Common myeloid progenitor, CD34-positive (primary cell): ENCODE measurements at regions of chr19 and their contacts with region 1.

Region 1: GRCh38 chr19:12064590-12065538 is at the start of gene ZNF844:
- DNase-seq: peak; percentile 81 to 89 (median 89)
- H3K4me3 ChIP-seq: peak within 1 kb of the TSS; percentile 52 to 92 (median 85)
- H3K27ac ChIP-seq: peak within 1 kb of the TSS; percentile 74 to 84
- H3K4me1 ChIP-seq: peaks cover 0 to 10% (median 3%) of the 10 kb centered on the region in 4 experiments
- H3K27me3 ChIP-seq: no peaks in the 10 kb centered on the region

Region 2: GRCh38 chr19:12052497-12053169 is 12.2 kb before region 1 on chr19 and contains the start of gene ZNF878:
- CTCF ChIA-PET with region 1: interaction called, 13 read pairs
- POLR2A ChIA-PET with region 1: no interaction called
- DNase-seq: peak; percentile 75 to 87 (median 85)
- H3K4me3 ChIP-seq: peak within 1 kb of the TSS; percentile 56 to 89 (median 81)
- H3K27ac ChIP-seq: no peak within 1 kb of the TSS
- H3K4me1 ChIP-seq: peaks cover 0 to 16% (median 14%) of the 10 kb centered on the region in 4 experiments
- H3K27me3 ChIP-seq: peaks cover 0 to 2% (median 0%) of the 10 kb centered on the region in 5 experiments

Region 3: GRCh38 chr19:12092065-12092867 is 27.4 kb after region 1 on chr19:
- CTCF ChIA-PET with region 1: interaction called, 16 read pairs
- POLR2A ChIA-PET with region 1: no interaction called
- DNase-seq: peak; percentile 90 to 97 (median 96)
- H3K4me3 ChIP-seq: peak overlapping the region; percentile 67 to 92 (median 81)
- H3K27ac ChIP-seq: peak overlapping the region; percentile 77 to 91
- H3K4me1 ChIP-seq: peaks cover 0 to 12% (median 4%) of the 10 kb centered on the region in 4 experiments
- H3K27me3 ChIP-seq: no peaks in the 10 kb centered on the region

Region 4: GRCh38 chr19:12126707-12127106 is 61.8 kb after region 1 on chr19:
- CTCF ChIA-PET with region 1: interaction called, 10 read pairs
- POLR2A ChIA-PET with region 1: no interaction called
- DNase-seq: peak; percentile 22 to 58 (median 51)
- H3K4me3 ChIP-seq: no peak overlapping the region
- H3K27ac ChIP-seq: no peak overlapping the region
- H3K4me1 ChIP-seq: no peaks in the 10 kb centered on the region
- H3K27me3 ChIP-seq: no peaks in the 10 kb centered on the region

Region 5: GRCh38 chr19:12139885-12140547 is 75.2 kb after region 1 on chr19 and contains the start of gene ZNF20:
- CTCF ChIA-PET with region 1: interaction called, 31 read pairs
- POLR2A ChIA-PET with region 1: interaction called, 4 read pairs
- DNase-seq: peak; percentile 91 to 94 (median 93)
- H3K4me3 ChIP-seq: peak within 1 kb of the TSS; percentile 68 to 95 (median 93)
- H3K27ac ChIP-seq: peak within 1 kb of the TSS; percentile 61 to 84
- H3K4me1 ChIP-seq: peaks cover 11 to 30% (median 15%) of the 10 kb centered on the region in 4 experiments
- H3K27me3 ChIP-seq: no peaks in the 10 kb centered on the region